Activated T-helper 2 cell treated with anti-CD3 and anti-CD28 coated beads, Interferon-gamma antibody, Interleukin-2, Interleukin-4, amounts not matched to agents 10 μg/mL and 5 μg/mL and 100 μg/mL, durations not matched to agents 14 hours and 24 hours and 36 hours (primary cell): ENCODE measurements at regions of chr11 and their contacts with region 1.

Region 1: GRCh38 chr11:68213555-68214174 is 569 bp upstream of the KMT5B start:
- DNase-seq: peak; percentile 82
- H3K4me3 Mint-ChIP-seq: peak overlapping the region; percentile 73
- H3K27ac Mint-ChIP-seq: peak overlapping the region; percentile 15
- H3K4me1 Mint-ChIP-seq: peaks cover 29% of the 10 kb centered on the region
- H3K27me3 Mint-ChIP-seq: peaks cover 15% of the 10 kb centered on the region

Region 2: GRCh38 chr11:68030318-68031138 is 183.1 kb before region 1 on chr11 and contains the start of gene NDUFS8:
- intact Hi-C with region 1: loop called (anchors 10 kb)
- DNase-seq: peak; percentile 95
- H3K4me3 Mint-ChIP-seq: peak within 1 kb of the TSS; percentile 97
- H3K27ac Mint-ChIP-seq: peak within 1 kb of the TSS; percentile 95
- H3K4me1 Mint-ChIP-seq: peaks cover 23% of the 10 kb centered on the region
- H3K27me3 Mint-ChIP-seq: no peaks in the 10 kb centered on the region
- total RNA-seq, gene NDUFS8: 125 and 139 TPM in 2 replicates

Region 3: DNA sequence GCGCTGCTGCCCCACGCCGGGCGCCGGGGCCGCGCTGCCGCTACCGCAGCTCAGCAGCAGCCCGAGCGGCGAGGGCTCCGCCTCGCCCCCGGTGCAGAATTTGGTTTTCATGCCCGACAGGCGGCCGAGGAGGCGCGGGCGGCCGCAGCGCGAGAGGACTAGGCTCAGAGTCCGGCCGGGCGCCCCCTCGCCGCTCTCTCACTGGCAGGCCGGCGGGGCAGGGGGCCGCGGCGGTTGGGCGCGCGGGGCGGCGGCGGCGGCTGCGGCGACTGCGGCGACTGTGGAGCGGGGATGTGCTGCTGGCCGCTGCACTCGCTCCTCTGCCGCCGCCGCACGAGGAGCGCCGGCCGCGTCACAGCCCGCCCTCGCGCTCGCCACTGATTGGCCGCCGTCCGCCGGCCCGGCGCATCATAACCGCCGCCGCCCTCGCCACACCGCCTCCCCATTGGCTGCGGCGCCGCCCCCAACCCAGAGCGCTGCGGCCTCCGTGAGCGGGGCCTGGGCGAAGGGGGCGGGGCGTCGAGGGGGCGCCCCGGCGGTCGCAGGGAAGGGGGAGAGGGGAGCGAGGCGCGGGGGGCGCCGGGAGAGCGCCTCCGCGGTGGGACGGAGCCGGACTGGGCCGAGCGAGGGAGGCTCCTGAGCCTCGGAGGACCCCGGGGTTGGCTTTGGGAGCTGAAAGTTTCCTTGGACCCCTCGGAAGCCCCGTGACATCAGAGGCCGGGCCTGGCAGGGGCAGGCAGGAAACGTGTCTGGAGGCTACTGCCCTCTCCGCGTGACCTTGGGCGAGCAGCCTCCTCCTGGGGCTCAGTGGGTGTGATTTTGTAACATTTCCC is 92.4 kb before region 1 on chr11 and contains the start of gene CHKA:
- intact Hi-C with region 1: loop called (anchors 2 kb)
- DNase-seq: peak; percentile 84
- H3K4me3 Mint-ChIP-seq: peak within 1 kb of the TSS; percentile 88
- H3K27ac Mint-ChIP-seq: peak within 1 kb of the TSS; percentile 89
- H3K4me1 Mint-ChIP-seq: peaks cover 12% of the 10 kb centered on the region
- H3K27me3 Mint-ChIP-seq: no peaks in the 10 kb centered on the region
- total RNA-seq, gene CHKA: 16.9 and 20.4 TPM in 2 replicates

Region 4: GRCh38 chr11:68231621-68232020 is 18.0 kb after region 1 on chr11:
- intact Hi-C with region 1: no loop called
- DNase-seq: no peak
- H3K4me3 Mint-ChIP-seq: no peak overlapping the region
- H3K27ac Mint-ChIP-seq: no peak overlapping the region
- H3K4me1 Mint-ChIP-seq: no peaks in the 10 kb centered on the region
- H3K27me3 Mint-ChIP-seq: peaks cover 7% of the 10 kb centered on the region

Region 5: GRCh38 chr11:68271781-68272608 is 58.3 kb after region 1 on chr11 and contains the start of gene C11orf24:
- intact Hi-C with region 1: loop called (anchors 5 kb)
- DNase-seq: peak; percentile 93
- H3K4me3 Mint-ChIP-seq: peak within 1 kb of the TSS; percentile 97
- H3K27ac Mint-ChIP-seq: peak within 1 kb of the TSS; percentile 89
- H3K4me1 Mint-ChIP-seq: peaks cover 26% of the 10 kb centered on the region
- H3K27me3 Mint-ChIP-seq: no peaks in the 10 kb centered on the region
- total RNA-seq, gene C11orf24: 32.7 and 34.2 TPM in 2 replicates

Region 6: DNA sequence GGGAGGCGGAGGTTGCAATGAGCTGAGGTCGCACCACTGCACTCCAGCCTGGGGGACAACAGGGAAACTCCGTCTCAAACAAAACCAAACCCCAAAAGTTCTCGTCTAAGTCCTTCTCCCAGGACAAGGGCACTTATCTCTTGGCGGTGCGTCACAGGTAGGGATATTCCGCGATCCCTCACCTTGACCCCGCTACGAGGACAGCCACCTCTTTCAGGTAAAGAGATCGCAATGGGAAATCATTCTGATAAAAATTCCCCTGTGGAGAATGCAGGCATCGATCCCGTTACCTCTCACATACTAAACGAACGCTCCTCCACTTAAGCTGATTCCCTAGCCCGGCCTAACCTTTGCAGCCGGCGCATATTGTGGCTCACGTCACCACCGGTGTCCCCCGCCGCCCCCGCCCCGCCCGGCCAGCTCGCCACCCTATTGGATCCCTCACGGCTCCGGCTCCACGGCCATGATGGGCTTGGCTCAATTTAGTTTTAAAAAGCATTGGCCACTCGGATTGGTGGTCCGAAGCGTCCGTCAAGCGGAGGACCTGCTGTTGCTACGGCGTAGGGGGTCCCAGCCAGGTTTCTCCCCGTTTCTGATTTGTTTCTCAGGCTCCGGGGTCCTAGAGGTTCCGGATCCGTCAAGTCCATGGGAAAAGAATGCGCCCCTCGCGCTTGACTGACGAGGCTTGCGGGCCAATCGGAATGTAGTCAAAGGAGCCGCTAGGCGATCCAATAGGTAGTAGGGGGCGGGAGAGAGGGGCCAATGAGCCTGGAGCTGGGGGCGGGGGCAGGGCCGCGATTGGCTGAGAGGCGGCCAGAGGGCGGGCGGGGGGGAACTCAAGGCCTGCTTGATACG is 246.4 kb after region 1 on chr11:
- intact Hi-C with region 1: loop called (anchors 5 kb)
- DNase-seq: peak; percentile 92
- H3K4me3 Mint-ChIP-seq: peak overlapping the region; percentile 88
- H3K27ac Mint-ChIP-seq: peak overlapping the region; percentile 89
- H3K4me1 Mint-ChIP-seq: peaks cover 23% of the 10 kb centered on the region
- H3K27me3 Mint-ChIP-seq: no peaks in the 10 kb centered on the region